A549 (cell line): ENCODE measurements at regions of chr17 and their contacts with region 1.

Region 1: DNA sequence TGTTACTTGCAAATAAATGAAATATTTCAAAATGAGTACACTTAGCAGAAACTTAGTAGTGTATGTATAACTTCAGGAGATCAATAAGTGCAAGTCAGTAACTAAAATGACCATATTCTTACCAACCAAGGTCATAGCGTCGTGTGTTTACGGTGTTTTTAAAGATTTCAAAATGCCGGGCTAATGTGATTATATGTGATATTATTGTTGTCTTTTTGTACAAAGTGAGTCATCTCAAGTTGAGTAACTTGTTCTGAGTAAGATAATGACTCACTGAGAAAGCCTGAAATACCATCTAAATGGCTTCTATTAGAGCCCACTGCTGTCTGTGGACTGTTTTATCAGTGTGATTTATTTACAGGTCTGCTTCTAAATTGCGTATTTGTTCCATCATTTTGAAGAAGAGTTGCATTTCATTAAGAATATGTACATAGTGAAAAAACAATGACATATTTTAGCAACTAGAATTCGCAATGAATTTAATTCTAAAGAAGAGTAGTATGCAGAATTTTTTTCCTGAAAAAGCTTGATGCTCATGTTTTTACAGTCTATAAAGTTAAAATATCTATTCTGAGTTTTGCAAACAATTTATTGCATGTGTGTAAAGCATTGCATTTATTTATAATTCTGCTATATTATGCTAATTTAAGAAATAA is 12.7 kb downstream of the KRT12 start:
- DNase-seq: peak; percentile 71 to 84
- ATAC-seq: peak; percentile 84 to 92
- H3K4me3 ChIP-seq: no peak overlapping the region
- H3K27ac ChIP-seq: peak overlapping the region; percentile 42 to 68
- H3K4me1 ChIP-seq: peaks cover 71% of the 10 kb centered on the region
- CTCF ChIP-seq: no peak
- EP300 ChIP-seq: peak; percentile 80; a peak in 3 of 5 replicates
- POLR2A ChIP-seq: no peak
- RAD21 ChIP-seq: peak in 1 of 2 experiments; percentile 42; a peak in 1 of 5 replicates

Region 2: DNA sequence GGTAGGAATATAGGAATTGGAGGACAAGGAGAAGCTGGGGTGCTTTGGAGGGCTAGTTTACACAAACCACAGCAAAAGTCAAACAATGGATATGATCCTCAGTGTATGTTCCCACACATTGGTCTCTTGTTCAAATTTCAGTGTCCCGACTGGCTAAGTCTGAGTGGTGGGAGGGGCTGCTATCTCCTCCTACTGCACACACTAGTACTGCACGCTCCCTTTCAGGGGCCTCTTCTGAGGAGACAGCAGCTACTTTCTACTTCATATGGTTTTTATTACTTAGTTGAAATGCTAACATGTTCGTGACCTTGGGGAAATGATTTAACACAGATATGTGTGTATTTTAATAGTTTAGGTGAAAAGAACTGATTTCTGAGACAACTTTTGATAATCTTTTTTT is 13.0 kb before region 1 on chr17:
- CTCF ChIA-PET with region 1: interaction called, 63 read pairs
- POLR2A ChIA-PET with region 1: no interaction called
- DNase-seq: no peak
- ATAC-seq: peak in 1 of 2 experiments; percentile 47; a peak in 1 of 6 replicates
- H3K4me3 ChIP-seq: no peak overlapping the region
- H3K27ac ChIP-seq: no peak overlapping the region
- H3K4me1 ChIP-seq: no peaks in the 10 kb centered on the region
- CTCF ChIP-seq: no peak
- EP300 ChIP-seq: no peak
- POLR2A ChIP-seq: no peak
- RAD21 ChIP-seq: no peak

Region 3: DNA sequence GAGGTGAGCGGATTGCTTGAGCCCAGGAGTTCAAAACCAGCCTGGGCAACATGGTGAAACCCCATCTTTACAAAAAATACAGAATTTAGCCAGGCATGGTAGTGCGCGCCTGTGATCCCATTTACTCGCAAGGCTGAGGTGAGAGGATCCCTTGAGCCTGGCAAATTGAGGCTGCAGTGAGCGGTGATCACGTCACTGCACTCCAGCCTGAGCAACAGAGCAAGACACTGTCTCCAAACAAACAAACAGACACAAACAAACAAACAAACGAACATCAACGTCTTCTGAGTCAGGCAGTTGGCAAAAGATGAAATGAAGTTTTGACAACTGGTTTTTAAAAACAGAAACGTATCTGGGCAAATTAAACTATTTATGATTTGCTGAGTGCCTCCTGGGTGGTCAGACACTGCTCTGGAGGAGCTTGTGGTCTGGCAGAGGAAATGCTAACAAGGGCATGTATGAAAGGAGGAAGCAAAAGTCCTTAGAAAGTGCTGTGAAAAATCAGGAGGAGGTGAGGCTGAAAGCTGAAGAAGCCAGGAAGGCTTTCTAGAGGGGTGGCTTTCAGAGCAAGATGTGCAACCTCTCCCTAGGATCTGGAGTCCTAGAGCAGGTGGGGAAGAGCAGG is 40.9 kb after region 1 on chr17:
- CTCF ChIA-PET with region 1: interaction called, 94 read pairs
- POLR2A ChIA-PET with region 1: no interaction called
- DNase-seq: peak in 1 of 2 experiments; percentile 40
- ATAC-seq: peak; percentile 28 to 84; a peak in 3 of 6 replicates
- H3K4me3 ChIP-seq: no peak overlapping the region
- H3K27ac ChIP-seq: peak overlapping the region; percentile 62 to 64
- H3K4me1 ChIP-seq: peaks cover 11% of the 10 kb centered on the region
- CTCF ChIP-seq: no peak
- EP300 ChIP-seq: no peak
- POLR2A ChIP-seq: no peak
- RAD21 ChIP-seq: no peak

Region 4: DNA sequence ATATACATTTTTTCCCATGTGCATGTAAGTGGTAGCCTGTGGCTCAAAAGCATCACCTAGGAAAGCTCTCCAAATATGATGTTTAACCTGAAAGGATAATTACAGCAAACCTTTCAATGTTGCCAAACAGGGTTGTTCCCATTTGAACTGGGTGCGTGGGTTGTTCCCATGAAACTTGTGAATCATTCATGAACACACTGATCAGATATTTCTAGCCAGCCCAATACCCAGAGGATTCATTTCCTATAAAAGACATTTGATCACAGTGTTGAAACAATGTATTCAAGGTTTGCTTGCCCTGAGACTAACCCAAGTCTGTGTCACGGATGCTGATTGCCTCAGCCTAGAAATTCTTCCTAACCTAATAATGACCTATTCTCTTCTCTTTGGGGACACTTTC is 99.6 kb after region 1 on chr17:
- CTCF ChIA-PET with region 1: no interaction called
- POLR2A ChIA-PET with region 1: no interaction called
- DNase-seq: peak in 1 of 2 experiments; percentile 21
- ATAC-seq: no peak
- H3K4me3 ChIP-seq: no peak overlapping the region
- H3K27ac ChIP-seq: peak overlapping the region in 1 of 2 experiments; percentile 54; a peak in 2 of 6 replicates
- H3K4me1 ChIP-seq: peaks cover 41% of the 10 kb centered on the region
- CTCF ChIP-seq: no peak
- EP300 ChIP-seq: no peak
- POLR2A ChIP-seq: no peak
- RAD21 ChIP-seq: no peak

Region 5: DNA sequence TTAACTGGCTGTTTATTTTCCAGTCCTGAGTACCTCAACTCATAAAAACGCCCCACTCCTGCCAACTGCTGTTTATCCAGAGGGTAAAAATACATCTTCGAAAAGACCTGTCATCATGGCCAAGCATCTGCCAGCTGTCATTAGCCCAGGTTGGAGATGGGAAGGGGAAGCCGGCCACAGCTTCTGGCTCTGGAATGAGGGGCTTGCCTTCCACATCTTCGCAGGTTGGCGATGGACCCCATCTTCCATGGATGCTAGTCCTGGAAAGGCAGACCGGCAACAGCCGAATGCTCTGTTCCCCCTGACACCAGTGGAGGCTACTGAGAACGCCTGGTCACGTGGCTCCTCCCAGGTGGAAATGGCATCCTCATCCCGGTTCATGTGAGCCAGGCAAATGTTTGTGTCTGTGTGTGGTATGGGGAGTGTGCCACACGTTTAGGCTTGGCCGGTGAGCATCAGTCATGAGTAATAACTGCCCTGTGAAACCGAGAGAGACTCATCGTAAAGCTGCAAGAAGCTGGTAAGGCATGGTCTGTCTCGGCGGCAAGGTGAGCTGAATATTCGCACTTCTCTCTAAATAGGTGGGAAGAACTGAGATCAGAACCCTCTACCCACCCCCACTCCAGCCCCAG is 461.6 kb after region 1 on chr17:
- CTCF ChIA-PET with region 1: interaction called, 58 read pairs
- POLR2A ChIA-PET with region 1: no interaction called
- DNase-seq: no peak
- ATAC-seq: no peak
- H3K4me3 ChIP-seq: no peak overlapping the region
- H3K27ac ChIP-seq: no peak overlapping the region
- H3K4me1 ChIP-seq: no peaks in the 10 kb centered on the region
- CTCF ChIP-seq: no peak
- EP300 ChIP-seq: no peak
- POLR2A ChIP-seq: no peak
- RAD21 ChIP-seq: no peak

Region 6: DNA sequence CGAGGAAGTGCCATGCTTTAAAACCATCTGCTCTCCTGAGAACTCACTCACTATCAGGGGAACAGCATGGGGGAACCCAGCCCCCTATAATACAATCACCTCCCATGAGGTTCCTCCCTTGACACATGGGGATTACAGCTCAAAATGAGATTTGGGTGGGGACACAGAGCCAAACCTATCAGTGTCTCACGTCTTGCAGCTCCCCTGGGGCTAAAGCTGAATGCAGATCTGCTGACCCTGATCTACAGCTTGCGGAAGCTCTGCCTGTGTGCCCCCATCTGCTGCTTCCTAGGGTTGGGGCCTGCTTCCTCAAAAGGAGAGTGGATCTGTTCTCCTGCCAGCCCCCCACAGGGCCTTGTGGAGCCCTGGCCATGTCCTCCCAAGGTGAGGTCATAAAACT is 480.1 kb after region 1 on chr17:
- CTCF ChIA-PET with region 1: interaction called, 18 read pairs
- POLR2A ChIA-PET with region 1: no interaction called
- DNase-seq: no peak
- ATAC-seq: no peak
- H3K4me3 ChIP-seq: no peak overlapping the region
- H3K27ac ChIP-seq: no peak overlapping the region
- H3K4me1 ChIP-seq: no peaks in the 10 kb centered on the region
- CTCF ChIP-seq: no peak
- EP300 ChIP-seq: no peak
- POLR2A ChIP-seq: no peak
- RAD21 ChIP-seq: no peak